Ovary (tissue), 10 donors: ENCODE measurements at regions of chr12 and their contacts with region 1.

Region 1: GRCh38 chr12:49121047-49121696 is 10.0 kb downstream of the TUBA1B start:
- DNase-seq: peak in 1 of 5 donors; percentile 44
- H3K4me3 ChIP-seq: no peak overlapping the region
- H3K27ac ChIP-seq: no peak overlapping the region
- H3K4me1 ChIP-seq: no peaks in the 10 kb centered on the region
- H3K27me3 ChIP-seq: no peaks in the 10 kb centered on the region
- CTCF ChIP-seq: peak in 2 of 3 donors; percentile 25 to 49
- EP300 ChIP-seq: no peak
- POLR2A ChIP-seq: no peak

Region 2: GRCh38 chr12:47828608-47829536 is 1292.3 kb before region 1 on chr12:
- intact Hi-C with region 1: no loop called
- DNase-seq: peak; percentile 91 to 94 (median 93)
- H3K4me3 ChIP-seq: no peak overlapping the region
- H3K27ac ChIP-seq: peak overlapping the region; percentile 71 to 89
- H3K4me1 ChIP-seq: peaks cover 15% of the 10 kb centered on the region
- H3K27me3 ChIP-seq: no peaks in the 10 kb centered on the region
- CTCF ChIP-seq: no peak
- EP300 ChIP-seq: no peak
- POLR2A ChIP-seq: no peak

Region 3: GRCh38 chr12:49088190-49088931 is 32.8 kb before region 1 on chr12:
- intact Hi-C with region 1: loop called in 3 of 4 experiments (anchors 2 to 5 kb)
- DNase-seq: peak; percentile 70 to 79 (median 74)
- H3K4me3 ChIP-seq: no peak overlapping the region
- H3K27ac ChIP-seq: no peak overlapping the region
- H3K4me1 ChIP-seq: peaks cover 13% of the 10 kb centered on the region
- H3K27me3 ChIP-seq: peaks cover 2% of the 10 kb centered on the region
- CTCF ChIP-seq: peak; percentile 78 to 85 (median 84)
- EP300 ChIP-seq: no peak
- POLR2A ChIP-seq: no peak